Activated CD8-positive, alpha-beta T cell treated with anti-CD3 and anti-CD28 coated beads for 36 hours (primary cell): ENCODE measurements at regions of chr20 and their contacts with region 1.

Region 1: GRCh38 chr20:57498425-57499400 is 26.2 kb downstream of the CTCFL start:
- DNase-seq: peak; percentile 66
- ATAC-seq: peak; percentile 86
- H3K4me3 Mint-ChIP-seq: no peak overlapping the region
- H3K27ac Mint-ChIP-seq: no peak overlapping the region
- H3K4me1 Mint-ChIP-seq: peaks cover 11% of the 10 kb centered on the region
- H3K27me3 Mint-ChIP-seq: peaks cover 30% of the 10 kb centered on the region
- CTCF ChIP-seq: peak; percentile 52

Region 2: GRCh38 chr20:57473246-57474048 is 25.3 kb before region 1 on chr20:
- CTCF ChIA-PET with region 1: interaction called, 16 read pairs
- POLR2A ChIA-PET with region 1: interaction called, 3 read pairs
- intact Hi-C with region 1: no loop called
- DNase-seq: peak; percentile 71
- ATAC-seq: peak; percentile 93
- H3K4me3 Mint-ChIP-seq: no peak overlapping the region
- H3K27ac Mint-ChIP-seq: peak overlapping the region; percentile 49
- H3K4me1 Mint-ChIP-seq: peaks cover 22% of the 10 kb centered on the region
- H3K27me3 Mint-ChIP-seq: no peaks in the 10 kb centered on the region
- CTCF ChIP-seq: no peak

Region 3: DNA sequence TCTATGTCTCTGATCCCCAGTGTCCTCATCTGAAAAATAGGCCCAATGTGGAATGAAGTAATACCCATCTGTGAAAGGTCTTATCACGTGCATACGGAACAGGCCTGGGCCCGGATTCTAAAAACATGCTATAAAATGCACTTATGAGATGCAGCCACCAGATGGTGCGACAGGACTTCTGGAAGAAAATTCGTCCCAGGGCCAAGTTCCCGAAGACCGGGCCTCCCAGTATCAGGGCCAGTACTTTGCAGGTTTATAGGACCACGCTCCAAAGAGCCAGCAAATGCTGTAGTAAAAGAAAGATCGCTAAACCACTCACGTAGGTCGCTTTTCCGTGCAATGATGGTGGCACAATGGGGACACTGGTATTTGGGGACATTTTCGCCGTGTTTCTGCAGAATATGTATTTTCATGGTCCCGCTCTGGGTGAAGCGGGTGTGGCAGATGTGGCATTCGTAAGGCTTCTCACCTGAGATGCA is 15.6 kb after region 1 on chr20:
- CTCF ChIA-PET with region 1: interaction called, 13 read pairs
- POLR2A ChIA-PET with region 1: no interaction called
- intact Hi-C with region 1: no loop called
- DNase-seq: peak; percentile 53
- ATAC-seq: no peak
- H3K4me3 Mint-ChIP-seq: no peak overlapping the region
- H3K27ac Mint-ChIP-seq: no peak overlapping the region
- H3K4me1 Mint-ChIP-seq: no peaks in the 10 kb centered on the region
- H3K27me3 Mint-ChIP-seq: peaks cover 7% of the 10 kb centered on the region
- CTCF ChIP-seq: peak; percentile 62